A549 (cell line): ENCODE measurements at regions of chr11 and their contacts with region 1.

Region 1: GRCh38 chr11:46238967-46239800 is 38.3 kb upstream of the CREB3L1 start:
- DNase-seq: peak; percentile 85 to 86
- ATAC-seq: peak; percentile 57 to 87
- H3K4me3 ChIP-seq: peak overlapping the region; percentile 53
- H3K27ac ChIP-seq: peak overlapping the region; percentile 78 to 89
- H3K4me1 ChIP-seq: peaks cover 36% of the 10 kb centered on the region
- CTCF ChIP-seq: peak; percentile 95
- EP300 ChIP-seq: no peak
- POLR2A ChIP-seq: no peak
- RAD21 ChIP-seq: peak; percentile 89 to 96

Region 2: DNA sequence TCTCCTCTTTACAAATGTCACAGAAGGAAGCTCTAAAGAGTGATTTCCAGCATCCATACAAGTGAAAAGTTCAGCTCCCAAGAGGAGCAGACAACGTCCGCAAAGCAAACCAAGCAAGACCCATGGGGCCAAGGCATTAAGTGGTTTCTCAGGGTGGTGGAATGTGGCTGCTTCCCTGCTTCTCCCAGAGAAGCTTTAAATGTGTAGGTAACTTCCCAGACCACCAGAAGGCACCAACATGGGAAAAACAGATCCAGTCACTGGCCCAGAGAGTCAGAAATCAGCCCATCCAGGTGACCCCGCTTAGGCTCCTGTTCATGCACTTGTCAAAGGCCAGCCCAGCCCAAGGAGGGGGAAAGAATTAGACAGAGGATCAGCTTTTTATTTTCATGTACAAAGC is 104.6 kb before region 1 on chr11:
- CTCF ChIA-PET with region 1: interaction called, 26 read pairs
- POLR2A ChIA-PET with region 1: no interaction called
- DNase-seq: no peak
- ATAC-seq: peak in 1 of 2 experiments; percentile 45; a peak in 2 of 6 replicates
- H3K4me3 ChIP-seq: no peak overlapping the region
- H3K27ac ChIP-seq: no peak overlapping the region
- H3K4me1 ChIP-seq: peaks cover 10% of the 10 kb centered on the region; the same call in 1 of the 3 replicates
- CTCF ChIP-seq: no peak
- EP300 ChIP-seq: no peak
- POLR2A ChIP-seq: no peak
- RAD21 ChIP-seq: no peak

Region 3: DNA sequence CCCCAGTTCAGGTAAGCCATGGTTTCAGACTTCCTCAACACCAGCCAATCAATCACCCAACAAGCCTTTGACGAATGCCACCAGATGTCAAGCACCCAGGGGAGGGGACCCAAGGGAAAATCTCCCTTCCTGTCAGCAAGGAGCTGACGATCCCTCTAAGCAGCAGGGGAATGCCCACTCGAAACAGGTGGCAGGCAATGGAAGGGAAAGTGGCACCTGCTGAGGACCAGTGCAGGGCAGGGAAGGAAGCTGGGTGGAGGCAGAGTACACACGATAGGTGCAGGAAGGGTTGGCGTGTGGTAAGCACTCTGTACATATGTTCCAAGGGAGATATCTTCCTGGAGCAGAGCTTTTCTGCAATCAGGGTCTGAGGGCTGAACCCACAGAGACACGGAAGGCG is 26.6 kb after region 1 on chr11:
- CTCF ChIA-PET with region 1: interaction called, 18 read pairs
- POLR2A ChIA-PET with region 1: interaction called, 3 read pairs
- DNase-seq: no peak
- ATAC-seq: no peak
- H3K4me3 ChIP-seq: no peak overlapping the region
- H3K27ac ChIP-seq: no peak overlapping the region
- H3K4me1 ChIP-seq: no peaks in the 10 kb centered on the region
- CTCF ChIP-seq: no peak
- EP300 ChIP-seq: no peak
- POLR2A ChIP-seq: no peak
- RAD21 ChIP-seq: no peak

Region 4: DNA sequence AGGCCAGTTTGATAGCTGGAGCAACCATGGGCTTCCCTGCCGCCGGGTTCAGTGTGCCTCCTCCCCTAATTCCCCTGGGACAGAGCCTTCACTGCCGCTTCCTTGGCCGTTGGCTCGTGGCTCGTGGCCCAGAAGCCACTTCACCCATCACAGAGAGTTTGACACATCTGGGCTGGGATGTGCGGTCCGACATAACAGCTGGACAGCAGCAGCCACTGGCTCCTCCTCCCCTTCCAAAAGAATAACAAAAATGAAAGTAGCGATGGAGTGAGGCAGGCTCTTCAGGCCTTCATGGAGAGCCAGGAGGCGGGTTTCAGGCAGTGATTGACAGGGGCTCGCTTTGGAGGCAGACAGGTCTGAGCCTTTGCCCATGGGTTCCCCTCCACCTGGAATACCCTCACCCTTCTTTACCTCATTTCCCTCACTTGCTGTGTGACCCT is 46.4 kb after region 1 on chr11:
- CTCF ChIA-PET with region 1: interaction called, 872 read pairs
- POLR2A ChIA-PET with region 1: interaction called, 13 read pairs
- DNase-seq: no peak
- ATAC-seq: no peak
- H3K4me3 ChIP-seq: no peak overlapping the region
- H3K27ac ChIP-seq: no peak overlapping the region
- H3K4me1 ChIP-seq: peaks cover 11% of the 10 kb centered on the region
- CTCF ChIP-seq: no peak
- EP300 ChIP-seq: no peak
- POLR2A ChIP-seq: no peak
- RAD21 ChIP-seq: no peak

Region 5: GRCh38 chr11:46315033-46315738 is 76.0 kb after region 1 on chr11:
- CTCF ChIA-PET with region 1: interaction called, 872 read pairs
- POLR2A ChIA-PET with region 1: interaction called, 25 read pairs
- DNase-seq: peak; percentile 87 to 98
- ATAC-seq: peak; percentile 69 to 96
- H3K4me3 ChIP-seq: no peak overlapping the region
- H3K27ac ChIP-seq: no peak overlapping the region; a peak in 1 of 6 replicates
- H3K4me1 ChIP-seq: peaks cover under 1% of the 10 kb centered on the region; the same call in 1 of the 3 replicates
- CTCF ChIP-seq: peak; percentile 80
- EP300 ChIP-seq: no peak
- POLR2A ChIP-seq: no peak
- RAD21 ChIP-seq: peak; percentile 73 to 78

Region 6: DNA sequence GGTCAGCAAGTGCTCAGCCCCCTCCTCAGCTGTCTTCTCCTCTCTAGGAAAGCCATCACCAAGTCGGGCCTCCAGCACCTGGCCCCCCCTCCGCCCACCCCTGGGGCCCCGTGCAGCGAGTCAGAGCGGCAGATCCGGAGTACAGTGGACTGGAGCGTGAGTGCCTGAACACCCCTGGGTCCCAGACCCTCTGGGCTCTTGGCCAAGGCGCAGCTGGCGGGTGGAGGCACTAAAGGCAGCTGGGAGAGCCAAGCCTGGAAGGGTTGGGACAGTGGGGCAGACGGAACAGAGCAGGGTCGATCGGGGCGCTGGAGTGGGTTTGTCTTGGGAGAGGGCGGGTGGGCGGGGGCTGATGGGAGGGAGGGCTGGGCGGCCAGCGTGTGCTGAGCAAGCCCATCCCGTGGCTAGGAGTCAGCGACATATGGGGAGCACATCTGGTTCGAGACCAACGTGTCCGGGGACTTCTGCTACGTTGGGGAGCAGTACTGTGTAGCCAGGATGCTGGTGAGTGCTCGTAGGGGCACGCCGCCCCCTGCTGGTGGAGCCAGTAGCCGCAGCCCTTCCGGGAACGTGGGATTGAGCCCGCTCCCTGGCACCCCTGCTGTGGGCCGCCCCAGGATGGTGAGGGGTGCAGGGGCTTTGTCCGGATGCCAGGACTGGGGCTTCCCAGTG is 128.2 kb after region 1 on chr11:
- CTCF ChIA-PET with region 1: interaction called, 60 read pairs
- POLR2A ChIA-PET with region 1: interaction called, 3 read pairs
- DNase-seq: peak in 1 of 2 experiments; percentile 46
- ATAC-seq: peak; percentile 59 to 83
- H3K4me3 ChIP-seq: no peak overlapping the region
- H3K27ac ChIP-seq: 0 out of 6 replicates have a peak overlapping the region, but pooled peaks of 1 of the 2 experiments have one; percentile 30
- H3K4me1 ChIP-seq: peaks cover 10% of the 10 kb centered on the region
- CTCF ChIP-seq: peak; percentile 71
- EP300 ChIP-seq: no peak
- POLR2A ChIP-seq: no peak
- RAD21 ChIP-seq: peak; percentile 57 to 61; a peak in 4 of 5 replicates